Mammary epithelial cell (primary cell): ENCODE measurements at regions of chr18 and their contacts with region 1.

Region 1: DNA sequence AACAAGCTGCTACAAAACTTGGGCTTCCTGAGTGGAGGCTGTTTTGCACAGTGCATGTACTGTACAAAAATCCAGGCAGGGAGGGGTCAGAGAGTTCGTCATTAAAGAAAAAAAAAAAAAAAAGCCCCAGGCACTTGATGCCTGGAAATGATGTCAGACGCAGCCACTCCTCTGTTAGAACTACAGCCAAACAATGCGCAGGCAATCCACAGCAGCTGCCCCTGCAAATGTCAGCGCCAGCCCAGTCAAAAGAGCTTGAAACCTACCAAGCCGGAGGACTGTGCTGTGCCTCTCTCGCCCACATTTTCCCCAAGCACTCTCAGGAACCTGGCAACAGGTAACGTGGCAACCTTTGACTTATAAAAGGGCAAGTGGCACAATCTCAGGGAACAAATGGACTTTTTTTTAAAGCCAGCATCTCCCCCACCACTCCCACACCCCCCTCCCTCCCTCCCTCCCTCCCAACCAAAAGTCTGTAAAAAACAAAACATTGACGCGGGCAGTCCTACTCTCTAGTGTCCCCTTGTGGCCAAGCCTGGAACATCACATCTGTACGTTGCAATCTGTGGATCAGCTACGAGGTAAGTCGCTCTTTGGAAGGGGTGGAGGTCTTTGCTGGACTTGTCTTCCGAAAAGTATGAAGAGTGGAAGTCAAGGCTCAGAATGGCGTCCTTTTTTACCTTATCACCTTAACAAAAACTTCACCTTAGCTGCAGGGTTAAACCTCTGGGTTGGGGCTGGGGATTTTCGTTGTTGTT is 144.1 kb downstream of the TGIF1 start:
- DNase-seq: peak; percentile 87
- H3K4me3 ChIP-seq: peak overlapping the region; percentile 45 to 56 (median 53)
- H3K27ac ChIP-seq: peak overlapping the region; percentile 99
- H3K4me1 ChIP-seq: peaks cover 49% of the 10 kb centered on the region
- H3K27me3 ChIP-seq: no peaks in the 10 kb centered on the region
- CTCF ChIP-seq: peak; percentile 92 to 95

Region 2: GRCh38 chr18:3261371-3262246 is 332.5 kb before region 1 on chr18 and contains the start of gene MYL12B:
- CTCF ChIA-PET with region 1: no interaction called
- dilution Hi-C with region 1: no loop called
- in situ Hi-C with region 1: loop called in 1 of 2 experiments (anchors 5 kb)
- intact Hi-C with region 1: no loop called
- DNase-seq: peak; percentile 82
- H3K4me3 ChIP-seq: peak within 1 kb of the TSS; percentile 77 to 93 (median 85)
- H3K27ac ChIP-seq: peak within 1 kb of the TSS; percentile 97
- H3K4me1 ChIP-seq: peaks cover 27% of the 10 kb centered on the region
- H3K27me3 ChIP-seq: no peaks in the 10 kb centered on the region
- CTCF ChIP-seq: peak in 1 of 2 donors; percentile 8
- total RNA-seq, gene MYL12B: 464 to 468 TPM

Region 3: DNA sequence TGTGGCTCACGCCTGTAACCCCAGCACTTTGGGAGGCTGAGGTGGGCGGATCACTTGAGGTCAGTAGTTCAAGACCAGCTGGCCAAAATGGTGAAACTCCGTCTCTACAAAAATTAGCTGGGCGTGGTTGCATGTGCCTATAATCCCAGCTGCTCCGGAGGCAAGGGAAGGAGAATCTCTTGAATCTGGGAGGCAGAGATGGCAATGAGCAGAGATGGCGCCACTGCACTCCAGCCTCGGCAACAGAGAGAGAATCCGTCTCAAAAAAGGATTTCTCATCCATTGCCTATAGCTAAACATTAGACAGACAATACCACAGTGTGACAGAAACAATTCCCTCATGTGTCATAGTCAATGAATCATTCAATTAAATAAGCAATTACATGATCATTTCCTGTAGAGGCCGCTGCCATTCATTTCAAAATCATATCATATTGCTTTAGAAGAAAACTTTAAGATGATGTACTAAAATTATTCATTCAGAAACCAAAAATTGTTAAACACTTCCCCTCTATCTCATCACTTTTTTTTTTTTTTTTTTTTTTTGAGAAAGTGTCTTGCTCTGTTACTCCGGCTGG is 213.6 kb before region 1 on chr18:
- CTCF ChIA-PET with region 1: no interaction called
- dilution Hi-C with region 1: no loop called
- in situ Hi-C with region 1: no loop called
- intact Hi-C with region 1: loop called (anchors 5 kb)
- DNase-seq: peak; percentile 82
- H3K4me3 ChIP-seq: no peak overlapping the region
- H3K27ac ChIP-seq: peak overlapping the region; percentile 51
- H3K4me1 ChIP-seq: peaks cover 11% of the 10 kb centered on the region
- H3K27me3 ChIP-seq: no peaks in the 10 kb centered on the region
- CTCF ChIP-seq: peak; percentile 36 to 42

Region 4: DNA sequence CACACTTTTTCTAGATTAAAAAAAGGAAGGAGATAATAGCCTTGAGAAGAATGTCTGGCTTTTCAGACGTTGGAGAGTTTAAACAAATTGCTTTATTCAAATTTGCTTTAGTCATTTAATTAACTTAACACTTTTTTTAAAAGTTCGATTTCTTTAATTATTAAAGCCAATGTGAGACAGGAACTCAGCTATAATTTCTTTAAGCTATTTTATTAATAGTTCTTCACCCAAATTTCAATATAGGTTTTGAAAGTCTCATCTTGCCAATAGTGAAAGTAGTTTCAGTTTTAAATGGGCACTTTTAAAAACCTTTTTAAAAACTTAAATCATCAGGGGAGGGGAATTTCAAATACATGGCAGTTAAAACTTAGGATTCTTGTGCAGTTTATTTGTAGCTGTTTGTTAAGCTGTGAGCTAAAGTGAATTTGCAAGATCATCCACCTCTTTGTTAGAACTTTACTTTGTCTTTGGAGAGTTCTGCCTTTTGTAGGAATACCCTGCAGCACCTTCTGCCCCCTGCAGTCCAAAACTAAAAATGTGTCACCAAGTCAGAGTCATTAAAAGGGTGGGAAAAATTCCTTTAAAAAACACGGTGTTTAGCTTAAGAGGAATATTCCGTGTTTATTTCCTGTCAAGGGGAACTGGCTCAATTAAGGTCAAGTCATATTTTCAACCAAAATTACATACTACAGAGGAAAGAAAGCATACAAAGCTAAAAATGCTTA is 139.6 kb before region 1 on chr18:
- CTCF ChIA-PET with region 1: interaction called, 3 read pairs
- dilution Hi-C with region 1: no loop called
- in situ Hi-C with region 1: loop called in 1 of 2 experiments (anchors 5 kb)
- intact Hi-C with region 1: loop called (anchors 1 kb)
- DNase-seq: peak; percentile 46
- H3K4me3 ChIP-seq: peak overlapping the region; percentile 48 to 91 (median 75)
- H3K27ac ChIP-seq: peak overlapping the region; percentile 97
- H3K4me1 ChIP-seq: peaks cover 41% of the 10 kb centered on the region
- H3K27me3 ChIP-seq: no peaks in the 10 kb centered on the region
- CTCF ChIP-seq: peak; percentile 60 to 63

Region 5: DNA sequence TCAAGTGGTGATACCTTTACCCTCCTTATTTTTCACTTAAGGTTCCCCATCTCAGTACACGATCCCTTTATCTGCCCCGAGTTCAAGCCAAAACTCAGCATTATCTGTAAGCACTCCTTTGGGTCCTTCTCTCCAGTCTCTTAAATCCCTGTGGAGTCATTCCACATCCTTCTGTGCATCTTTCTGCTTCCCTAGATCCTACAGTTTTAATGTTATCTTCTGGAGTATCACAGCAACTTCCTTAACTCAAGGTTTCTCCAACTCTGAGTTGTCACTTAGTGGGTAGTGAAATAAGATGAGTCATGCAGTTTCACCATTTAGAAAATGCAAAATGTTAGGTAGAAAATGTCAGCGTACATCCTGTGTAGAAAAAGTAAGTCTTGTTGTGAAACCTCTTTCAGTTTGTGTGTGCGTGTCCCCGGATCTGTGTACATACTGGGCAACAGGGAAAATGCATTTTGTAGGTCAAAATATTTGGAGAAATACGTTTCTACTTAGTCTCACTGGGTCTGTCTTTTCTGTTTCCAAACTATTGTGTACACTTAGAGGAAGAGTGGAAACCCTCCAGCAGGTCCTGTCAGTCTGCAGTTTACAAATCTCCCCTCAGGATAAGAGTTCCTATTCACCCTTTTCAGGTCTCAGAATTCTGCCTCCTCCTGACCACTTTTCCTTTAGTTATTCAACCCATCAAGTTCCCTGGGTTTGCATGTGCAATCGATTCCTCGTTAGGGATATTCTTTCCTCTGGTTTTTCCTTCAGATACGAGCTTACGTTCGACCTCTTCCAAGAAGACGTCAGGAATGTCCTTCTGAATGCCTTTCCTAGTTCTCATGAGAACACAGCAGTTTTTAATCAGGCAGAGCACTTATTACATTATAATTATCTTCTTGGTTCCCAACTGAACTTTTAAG is 10.7 kb after region 1 on chr18:
- CTCF ChIA-PET with region 1: interaction called, 12 read pairs
- dilution Hi-C with region 1: no loop called
- in situ Hi-C with region 1: no loop called
- intact Hi-C with region 1: loop called (anchors 1 kb)
- DNase-seq: peak; percentile 91
- H3K4me3 ChIP-seq: peak overlapping the region; percentile 25 to 53 (median 42)
- H3K27ac ChIP-seq: peak overlapping the region; percentile 99
- H3K4me1 ChIP-seq: peaks cover 35% of the 10 kb centered on the region
- H3K27me3 ChIP-seq: no peaks in the 10 kb centered on the region
- CTCF ChIP-seq: no peak

Region 6: DNA sequence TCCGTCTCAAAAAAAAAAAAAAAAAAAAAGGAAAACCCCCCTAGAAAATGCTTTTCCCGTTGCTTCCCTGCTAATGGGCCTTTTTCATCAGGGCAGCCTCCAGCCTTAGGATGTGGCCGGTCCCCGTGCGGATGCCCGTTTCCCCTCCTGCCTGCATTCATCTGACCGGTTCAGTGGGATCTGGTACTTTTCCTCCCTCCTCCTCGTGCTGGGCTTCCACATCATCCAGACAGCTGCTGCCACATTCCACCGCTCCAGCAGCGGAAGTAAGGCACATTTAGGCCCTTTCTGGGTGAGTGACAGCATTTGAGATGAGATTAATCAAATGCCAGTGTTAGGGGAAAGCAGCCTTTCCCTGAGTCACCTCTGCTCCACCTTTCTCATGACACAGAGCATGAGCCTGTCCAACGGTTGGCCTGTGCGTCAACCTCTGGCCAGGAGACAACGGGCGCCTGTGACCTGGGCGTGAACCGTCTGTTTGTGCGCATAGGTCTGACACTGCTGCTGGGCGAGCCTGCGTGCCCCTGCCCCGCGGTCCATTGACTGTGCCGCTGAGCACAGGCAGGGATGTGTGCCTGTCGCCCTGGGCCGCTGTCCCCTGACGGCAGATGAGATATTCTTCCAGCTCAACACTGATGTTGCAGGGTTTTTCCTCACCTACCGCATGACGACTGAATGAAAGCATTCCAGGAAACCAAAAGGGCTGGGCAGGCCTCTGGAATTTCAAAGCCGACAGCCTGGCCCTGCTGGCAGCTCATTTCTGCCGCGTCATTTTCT is 29.9 kb after region 1 on chr18:
- CTCF ChIA-PET with region 1: interaction called, 27 read pairs
- dilution Hi-C with region 1: no loop called
- in situ Hi-C with region 1: no loop called
- intact Hi-C with region 1: loop called (anchors 1 kb)
- DNase-seq: peak; percentile 98
- H3K4me3 ChIP-seq: peak overlapping the region; percentile 18 to 43 (median 39)
- H3K27ac ChIP-seq: peak overlapping the region; percentile 100
- H3K4me1 ChIP-seq: peaks cover 40% of the 10 kb centered on the region
- H3K27me3 ChIP-seq: no peaks in the 10 kb centered on the region
- CTCF ChIP-seq: no peak

Region 7: DNA sequence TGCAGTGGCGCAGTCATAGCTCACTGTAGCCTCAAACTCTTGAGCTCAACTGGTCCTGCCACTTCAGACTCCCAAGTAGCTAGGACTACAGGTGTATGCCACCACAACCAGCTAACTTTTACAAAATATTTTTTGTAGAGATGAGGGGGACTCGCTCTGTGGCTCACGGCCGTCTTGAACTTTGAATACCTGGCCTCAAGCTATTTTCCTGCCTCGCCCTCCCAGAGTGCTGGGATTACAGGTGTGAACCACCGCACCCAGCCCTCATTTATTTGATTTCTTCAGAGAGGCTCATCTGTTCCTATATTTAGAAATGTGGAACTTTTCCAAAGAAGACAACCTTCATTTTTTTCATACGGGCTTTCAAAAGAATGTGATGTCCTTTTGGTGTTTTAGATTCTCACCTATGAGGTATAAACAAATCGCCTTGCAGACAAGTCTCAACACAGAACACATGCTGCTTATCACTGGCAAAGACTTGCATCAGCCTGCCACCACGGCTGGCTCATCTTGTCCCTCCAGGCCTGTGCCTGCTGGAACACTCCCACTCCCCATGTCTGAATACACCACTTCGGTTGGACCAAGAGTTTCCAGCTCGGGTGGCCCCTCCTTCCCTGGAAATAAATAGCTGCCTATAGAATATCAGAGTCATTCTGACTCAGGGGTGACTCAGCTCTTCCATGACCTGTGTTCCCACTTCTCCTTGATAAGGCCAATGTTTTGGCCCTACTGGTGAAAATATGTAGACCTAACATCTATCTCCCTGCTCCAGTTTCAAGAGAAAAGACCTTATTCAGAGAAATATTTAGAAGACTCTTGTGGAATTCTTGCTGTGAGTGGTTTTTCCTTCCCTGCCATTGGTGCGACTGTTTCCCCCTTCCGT is 58.5 kb after region 1 on chr18:
- CTCF ChIA-PET with region 1: no interaction called
- dilution Hi-C with region 1: no loop called
- in situ Hi-C with region 1: no loop called
- intact Hi-C with region 1: loop called (anchors 2 kb)
- DNase-seq: peak; percentile 100
- H3K4me3 ChIP-seq: no peak overlapping the region
- H3K27ac ChIP-seq: peak overlapping the region; percentile 85
- H3K4me1 ChIP-seq: peaks cover 40% of the 10 kb centered on the region
- H3K27me3 ChIP-seq: no peaks in the 10 kb centered on the region
- CTCF ChIP-seq: peak in 1 of 2 donors; percentile 32

Region 8: DNA sequence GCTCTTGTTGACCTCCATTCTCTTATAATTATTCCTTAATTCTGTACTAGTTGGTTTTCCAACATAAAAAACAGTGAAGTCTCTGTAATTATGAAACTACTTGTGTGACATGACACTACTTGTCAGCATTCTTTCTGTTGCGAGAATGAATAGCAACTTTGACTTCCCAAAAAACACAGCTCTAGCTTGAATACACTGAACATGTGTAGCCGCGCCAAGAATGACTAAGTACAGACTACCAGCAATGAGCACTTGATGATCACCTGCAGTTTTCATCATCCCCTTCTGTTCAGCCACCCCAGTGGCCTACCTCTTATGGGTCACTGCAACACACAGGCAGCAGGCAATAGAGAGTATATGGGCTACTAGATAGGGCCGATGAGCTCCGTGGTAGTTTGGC is 85.2 kb after region 1 on chr18:
- CTCF ChIA-PET with region 1: no interaction called
- dilution Hi-C with region 1: no loop called
- in situ Hi-C with region 1: no loop called
- intact Hi-C with region 1: no loop called
- DNase-seq: peak; percentile 93
- H3K4me3 ChIP-seq: no peak overlapping the region
- H3K27ac ChIP-seq: peak overlapping the region; percentile 41
- H3K4me1 ChIP-seq: peaks cover 17% of the 10 kb centered on the region
- H3K27me3 ChIP-seq: no peaks in the 10 kb centered on the region
- CTCF ChIP-seq: no peak